ENCODE measurements at regions of chr14 and their contacts with region 1.

Region 1: GRCh38 chr14:95452176-95452892 is 64.1 kb downstream of the SYNE3 start:
- DNase-seq: peak in 2 of 3 donors; percentile 39 to 43
- H3K4me3 ChIP-seq: no peak overlapping the region
- H3K27ac ChIP-seq: no peak overlapping the region
- H3K4me1 ChIP-seq: no peaks in the 10 kb centered on the region
- H3K27me3 ChIP-seq: no peaks in the 10 kb centered on the region

Region 2: GRCh38 chr14:95418858-95419257 is 33.5 kb before region 1 on chr14:
- CTCF ChIA-PET with region 1: no interaction called
- POLR2A ChIA-PET with region 1: no interaction called
- DNase-seq: no peak
- H3K4me3 ChIP-seq: no peak overlapping the region
- H3K27ac ChIP-seq: no peak overlapping the region
- H3K4me1 ChIP-seq: no peaks in the 10 kb centered on the region
- H3K27me3 ChIP-seq: no peaks in the 10 kb centered on the region

Region 3: DNA sequence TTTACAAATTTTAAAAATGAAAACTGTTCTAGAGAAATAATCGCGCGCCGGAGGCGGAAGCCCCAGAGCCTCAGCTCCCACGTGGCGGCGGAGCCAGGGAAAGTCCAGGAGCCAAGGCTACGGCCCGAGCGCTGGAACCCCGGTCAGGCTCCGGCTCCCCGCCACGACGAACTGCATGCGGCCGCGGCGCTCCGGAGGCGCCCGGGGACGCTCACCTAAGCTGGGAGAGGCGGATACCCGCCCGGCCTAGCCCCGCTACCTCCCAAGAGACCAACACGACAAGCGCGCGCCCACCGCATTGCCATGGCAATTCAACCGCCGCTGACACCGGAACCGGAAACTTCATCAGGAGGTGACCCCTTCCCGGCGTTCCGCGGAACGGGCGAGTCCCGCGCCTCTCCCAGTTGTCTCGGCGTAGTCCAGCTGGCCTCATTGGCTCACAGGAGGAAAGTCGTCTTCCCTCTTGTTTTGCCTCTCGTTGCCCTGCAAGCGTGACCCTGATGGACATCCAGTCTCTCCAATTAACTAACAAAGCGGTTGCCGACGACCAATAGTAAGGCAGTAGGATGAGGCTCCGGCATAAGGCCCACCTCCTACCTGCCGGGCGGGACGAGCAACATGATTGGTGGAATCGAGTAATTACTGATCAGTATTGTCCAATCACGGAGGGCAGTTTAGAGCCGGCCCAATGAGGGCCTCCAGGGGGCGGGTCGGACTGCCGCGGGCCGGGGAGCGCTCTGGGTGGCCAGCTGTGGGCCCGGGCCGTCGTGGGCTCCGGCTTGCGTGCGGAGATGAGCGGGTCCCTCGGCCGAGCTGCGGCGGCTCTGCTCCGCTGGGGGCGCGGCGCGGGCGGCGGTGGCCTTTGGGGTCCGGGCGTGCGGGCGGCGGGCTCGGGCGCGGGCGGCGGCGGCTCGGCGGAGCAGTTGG is 82.2 kb after region 1 on chr14 and contains the start of gene GLRX5:
- CTCF ChIA-PET with region 1: interaction called, 259 read pairs
- POLR2A ChIA-PET with region 1: no interaction called
- DNase-seq: peak; percentile 100
- H3K4me3 ChIP-seq: peak within 1 kb of the TSS; percentile 75 to 90 (median 87)
- H3K27ac ChIP-seq: peak within 1 kb of the TSS; percentile 90 to 97
- H3K4me1 ChIP-seq: peaks cover 17 to 50% (median 33%) of the 10 kb centered on the region in 4 experiments
- H3K27me3 ChIP-seq: no peaks in the 10 kb centered on the region